HepG2 (cell line): ENCODE measurements at regions of chr15 and their contacts with region 1.

Region 1: GRCh38 chr15:81155375-81156218 is 21.5 kb downstream of the CFAP161 start:
- DNase-seq: peak; percentile 32
- ATAC-seq: peak; percentile 59
- H3K4me3 ChIP-seq: no peak overlapping the region
- H3K27ac ChIP-seq: no peak overlapping the region
- H3K4me1 ChIP-seq: no peaks in the 10 kb centered on the region
- H3K27me3 ChIP-seq: no peaks in the 10 kb centered on the region
- CTCF ChIP-seq: peak; percentile 62
- EP300 ChIP-seq: no peak
- POLR2A ChIP-seq: no peak
- RAD21 ChIP-seq: 0 out of 2 replicates have a peak, but pooled peaks have one; percentile 21

Region 2: GRCh38 chr15:80893777-80894176 is 261.8 kb before region 1 on chr15:
- CTCF ChIA-PET with region 1: no interaction called
- POLR2A ChIA-PET with region 1: no interaction called
- in situ Hi-C with region 1: no loop called
- intact Hi-C with region 1: no loop called
- DNase-seq: no peak
- ATAC-seq: no peak
- H3K4me3 ChIP-seq: no peak overlapping the region
- H3K27ac ChIP-seq: no peak overlapping the region
- H3K4me1 ChIP-seq: peaks cover 15% of the 10 kb centered on the region
- H3K27me3 ChIP-seq: no peaks in the 10 kb centered on the region
- CTCF ChIP-seq: no peak
- EP300 ChIP-seq: no peak
- POLR2A ChIP-seq: no peak
- RAD21 ChIP-seq: no peak

Region 3: DNA sequence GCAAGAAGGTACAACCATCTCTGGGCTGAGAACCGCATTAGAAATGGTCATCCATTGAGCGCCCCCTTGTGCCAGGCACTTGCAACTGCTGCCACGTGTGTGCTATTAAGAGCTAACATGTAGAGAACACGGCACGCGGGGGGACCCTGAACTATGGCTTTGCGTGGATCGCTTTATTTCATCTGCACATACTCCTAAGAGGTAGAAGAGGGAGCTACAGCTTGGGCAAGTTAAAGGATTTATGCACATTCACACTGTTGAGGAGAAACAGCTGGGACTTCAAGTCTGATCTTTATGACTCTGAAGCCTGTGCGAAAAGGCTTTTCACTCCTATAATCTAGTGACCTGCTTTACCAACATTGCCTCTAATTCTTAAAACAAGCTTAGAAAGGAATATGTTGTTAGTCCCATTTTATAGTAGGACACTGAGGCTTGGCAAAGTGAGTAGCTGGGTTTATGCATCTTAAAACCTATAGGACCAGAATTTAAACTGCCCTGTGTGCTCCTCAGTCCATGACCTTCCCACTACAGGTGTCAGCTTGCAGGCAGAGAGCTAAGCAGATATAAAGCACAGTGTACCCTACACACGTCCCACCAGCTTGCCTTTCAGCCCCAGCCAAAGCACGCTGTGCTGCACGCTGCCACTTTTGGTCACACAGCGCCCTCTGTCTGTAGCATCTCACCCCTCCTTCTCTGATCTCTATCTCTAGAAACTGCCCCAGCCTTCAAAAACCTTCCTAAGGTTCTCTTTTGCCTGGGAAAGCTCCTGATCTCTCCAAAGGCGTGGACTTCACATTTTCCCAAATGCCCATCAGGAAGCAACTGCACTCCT is 110.6 kb after region 1 on chr15:
- CTCF ChIA-PET with region 1: interaction called, 31 read pairs
- POLR2A ChIA-PET with region 1: no interaction called
- in situ Hi-C with region 1: loop called (anchors 5 kb)
- intact Hi-C with region 1: loop called (anchors 1 kb)
- DNase-seq: peak; percentile 59
- ATAC-seq: peak; percentile 98
- H3K4me3 ChIP-seq: no peak overlapping the region
- H3K27ac ChIP-seq: no peak overlapping the region
- H3K4me1 ChIP-seq: peaks cover 10% of the 10 kb centered on the region
- H3K27me3 ChIP-seq: peaks cover 0 to 12% of the 10 kb centered on the region in 2 experiments; a peak in 3 of 5 replicates
- CTCF ChIP-seq: peak; percentile 88
- EP300 ChIP-seq: no peak
- POLR2A ChIP-seq: no peak
- RAD21 ChIP-seq: peak; percentile 79